ENCODE measurements at regions of chr12 and their contacts with region 1.

Region 1: GRCh38 chr12:45612044-45612794 is 117.3 kb upstream of the ARID2 start:
- DNase-seq: no peak
- ATAC-seq: no peak
- H3K4me3 ChIP-seq: no peak overlapping the region
- H3K4me3 Mint-ChIP-seq: no peak overlapping the region
- H3K27ac ChIP-seq: no peak overlapping the region
- H3K27ac Mint-ChIP-seq: no peak overlapping the region
- H3K4me1 ChIP-seq: no peaks in the 10 kb centered on the region
- H3K4me1 Mint-ChIP-seq: peaks cover 0 to 5% (median 3%) of the 10 kb centered on the region in 3 donors
- H3K27me3 ChIP-seq: peaks cover 0 to 3% of the 10 kb centered on the region in 2 experiments
- H3K27me3 Mint-ChIP-seq: peaks cover 0 to 6% of the 10 kb centered on the region in 2 donors

Region 2: GRCh38 chr12:45582986-45583659 is 29.1 kb before region 1 on chr12:
- CTCF ChIA-PET with region 1: no interaction called
- POLR2A ChIA-PET with region 1: no interaction called
- DNase-seq: no peak
- ATAC-seq: no peak
- H3K4me3 ChIP-seq: no peak overlapping the region
- H3K4me3 Mint-ChIP-seq: no peak overlapping the region
- H3K27ac ChIP-seq: no peak overlapping the region
- H3K27ac Mint-ChIP-seq: no peak overlapping the region
- H3K4me1 ChIP-seq: no peaks in the 10 kb centered on the region
- H3K4me1 Mint-ChIP-seq: no peaks in the 10 kb centered on the region
- H3K27me3 ChIP-seq: no peaks in the 10 kb centered on the region
- H3K27me3 Mint-ChIP-seq: peaks cover 0 to 8% of the 10 kb centered on the region in 2 donors

Region 3: DNA sequence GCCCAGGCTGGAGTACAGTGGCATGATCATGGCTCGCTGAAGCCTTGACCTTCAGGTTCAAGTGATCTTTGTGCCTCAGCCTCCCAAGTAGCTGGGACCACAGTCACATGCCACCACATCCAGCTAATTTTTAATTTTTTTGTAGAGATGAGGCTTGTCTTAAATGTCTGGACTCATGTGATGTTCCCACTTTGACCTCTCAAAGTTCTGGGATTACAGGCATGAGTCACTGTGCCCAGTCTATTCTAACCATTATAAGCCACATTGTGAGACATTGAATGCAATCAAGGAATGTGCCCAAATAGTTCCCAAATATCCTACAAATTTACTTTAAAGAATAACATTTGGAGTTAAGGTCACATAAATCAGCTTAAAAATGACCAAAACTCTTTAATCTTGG is 13.5 kb before region 1 on chr12:
- CTCF ChIA-PET with region 1: interaction called in 1 of 2 experiments, 12 read pairs
- POLR2A ChIA-PET with region 1: no interaction called
- DNase-seq: no peak
- ATAC-seq: no peak
- H3K4me3 ChIP-seq: no peak overlapping the region
- H3K4me3 Mint-ChIP-seq: no peak overlapping the region
- H3K27ac ChIP-seq: no peak overlapping the region
- H3K27ac Mint-ChIP-seq: no peak overlapping the region
- H3K4me1 ChIP-seq: no peaks in the 10 kb centered on the region
- H3K4me1 Mint-ChIP-seq: no peaks in the 10 kb centered on the region
- H3K27me3 ChIP-seq: no peaks in the 10 kb centered on the region
- H3K27me3 Mint-ChIP-seq: peaks cover 3 to 15% of the 10 kb centered on the region in 2 donors

Region 4: DNA sequence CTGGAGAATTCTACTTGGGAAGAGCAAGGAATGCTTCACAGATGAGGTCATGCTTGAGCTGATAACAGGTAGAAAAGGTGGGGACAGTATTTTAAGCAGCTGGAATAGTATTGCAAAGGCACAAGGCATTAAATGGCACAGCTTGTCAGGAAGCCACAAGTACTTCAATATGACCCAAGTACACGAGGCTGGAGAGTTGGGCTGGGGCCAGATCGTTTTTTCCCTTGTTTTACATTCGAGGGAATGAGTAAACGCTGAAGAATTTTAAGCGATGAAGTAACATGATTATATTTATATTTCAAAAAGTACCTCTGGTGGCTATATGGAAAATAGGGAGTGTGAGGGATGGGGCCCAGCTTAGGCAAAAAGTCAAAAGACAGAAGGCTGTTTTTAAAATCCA is 62.4 kb after region 1 on chr12:
- CTCF ChIA-PET with region 1: no interaction called
- POLR2A ChIA-PET with region 1: no interaction called
- DNase-seq: no peak
- ATAC-seq: no peak
- H3K4me3 ChIP-seq: no peak overlapping the region
- H3K4me3 Mint-ChIP-seq: no peak overlapping the region
- H3K27ac ChIP-seq: no peak overlapping the region
- H3K27ac Mint-ChIP-seq: no peak overlapping the region
- H3K4me1 ChIP-seq: peaks cover 15 to 16% of the 10 kb centered on the region in 2 experiments
- H3K4me1 Mint-ChIP-seq: peaks cover 13 to 15% (median 15%) of the 10 kb centered on the region in 3 donors
- H3K27me3 ChIP-seq: peaks cover 0 to 2% of the 10 kb centered on the region in 2 experiments
- H3K27me3 Mint-ChIP-seq: no peaks in the 10 kb centered on the region